Mammary epithelial cell (primary cell): ENCODE measurements at regions of chr4 and their contacts with region 1.

Region 1: GRCh38 chr4:24285759-24286158 is 298.6 kb downstream of the DHX15 start:
- DNase-seq: no peak
- H3K4me3 ChIP-seq: no peak overlapping the region
- H3K27ac ChIP-seq: no peak overlapping the region
- H3K4me1 ChIP-seq: no peaks in the 10 kb centered on the region
- H3K27me3 ChIP-seq: peaks cover 2% of the 10 kb centered on the region
- CTCF ChIP-seq: no peak

Region 2: DNA sequence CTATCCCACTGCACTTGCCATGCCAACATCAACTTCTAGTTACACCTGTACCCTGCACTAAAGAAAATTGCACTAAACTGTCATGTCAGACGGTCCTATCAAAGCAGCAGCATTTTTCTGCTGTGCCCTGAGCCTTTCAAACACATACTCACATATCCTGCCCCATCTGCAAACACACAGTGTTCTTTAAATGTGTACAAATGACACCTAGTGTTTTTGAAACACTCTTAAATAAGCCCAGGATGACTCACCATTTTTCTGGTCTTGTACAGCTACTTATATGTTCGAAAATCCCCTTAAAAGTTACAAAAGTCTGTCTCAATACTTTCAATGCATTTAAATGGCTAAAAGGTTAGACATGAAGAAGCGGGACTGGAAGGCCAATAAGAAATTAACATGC is 49.2 kb before region 1 on chr4:
- CTCF ChIA-PET with region 1: no interaction called
- dilution Hi-C with region 1: loop called (anchors 5 kb)
- in situ Hi-C with region 1: no loop called
- intact Hi-C with region 1: no loop called
- DNase-seq: no peak
- H3K4me3 ChIP-seq: no peak overlapping the region
- H3K27ac ChIP-seq: no peak overlapping the region
- H3K4me1 ChIP-seq: no peaks in the 10 kb centered on the region
- H3K27me3 ChIP-seq: no peaks in the 10 kb centered on the region
- CTCF ChIP-seq: no peak

Region 3: GRCh38 chr4:24507439-24507838 is 221.7 kb after region 1 on chr4:
- CTCF ChIA-PET with region 1: no interaction called
- dilution Hi-C with region 1: no loop called
- in situ Hi-C with region 1: no loop called
- intact Hi-C with region 1: no loop called
- DNase-seq: no peak
- H3K4me3 ChIP-seq: no peak overlapping the region
- H3K27ac ChIP-seq: no peak overlapping the region
- H3K4me1 ChIP-seq: no peaks in the 10 kb centered on the region
- H3K27me3 ChIP-seq: no peaks in the 10 kb centered on the region
- CTCF ChIP-seq: no peak